CD4-positive, alpha-beta T cell (primary cell): ENCODE measurements at regions of chr10 and their contacts with region 1.

Region 1: DNA sequence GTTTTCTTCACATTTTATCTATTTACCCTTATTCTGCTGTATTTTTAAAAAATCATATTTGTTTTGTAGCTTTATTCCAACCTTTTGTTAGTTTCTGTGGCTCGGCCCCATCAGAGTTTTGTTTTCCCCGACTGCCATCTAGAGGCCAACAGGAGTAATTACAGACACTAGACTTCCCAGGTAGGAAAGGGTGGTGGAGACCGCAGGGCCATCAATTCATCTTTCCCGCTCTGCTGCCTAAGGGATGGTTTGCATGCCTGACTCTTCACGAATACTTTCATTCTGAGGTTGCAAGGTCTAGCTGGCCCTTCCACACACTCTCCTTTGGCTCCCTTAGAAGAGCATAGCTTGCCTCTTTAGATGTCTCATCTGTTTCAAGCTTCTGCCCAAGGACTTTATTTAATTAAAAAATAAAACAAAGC is 38.3 kb downstream of the LYZL2 start:
- DNase-seq: peak in 13 of 14 experiments; percentile 8 to 82 (median 20)
- ATAC-seq: peak; percentile 74
- H3K4me3 ChIP-seq: no peak overlapping the region
- H3K4me3 Mint-ChIP-seq: no peak overlapping the region
- H3K27ac ChIP-seq: no peak overlapping the region
- H3K27ac Mint-ChIP-seq: no peak overlapping the region
- H3K4me1 ChIP-seq: peaks cover 3% of the 10 kb centered on the region
- H3K4me1 Mint-ChIP-seq: no peaks in the 10 kb centered on the region
- H3K27me3 ChIP-seq: no peaks in the 10 kb centered on the region
- H3K27me3 Mint-ChIP-seq: no peaks in the 10 kb centered on the region
- CTCF ChIP-seq: peak; percentile 90

Region 2: GRCh38 chr10:30392564-30392990 is 198.7 kb before region 1 on chr10:
- CTCF ChIA-PET with region 1: interaction called, 16 read pairs
- POLR2A ChIA-PET with region 1: interaction called, 10 read pairs
- intact Hi-C with region 1: loop called (anchors 1 kb)
- DNase-seq: peak; percentile 59 to 86 (median 69)
- ATAC-seq: peak; percentile 100
- H3K4me3 ChIP-seq: no peak overlapping the region
- H3K4me3 Mint-ChIP-seq: no peak overlapping the region
- H3K27ac ChIP-seq: no peak overlapping the region
- H3K27ac Mint-ChIP-seq: no peak overlapping the region
- H3K4me1 ChIP-seq: peaks cover 7% of the 10 kb centered on the region
- H3K4me1 Mint-ChIP-seq: peaks cover 3% of the 10 kb centered on the region
- H3K27me3 ChIP-seq: peaks cover 0 to 2% of the 10 kb centered on the region in 2 experiments
- H3K27me3 Mint-ChIP-seq: peaks cover 12% of the 10 kb centered on the region
- CTCF ChIP-seq: peak; percentile 88

Region 3: DNA sequence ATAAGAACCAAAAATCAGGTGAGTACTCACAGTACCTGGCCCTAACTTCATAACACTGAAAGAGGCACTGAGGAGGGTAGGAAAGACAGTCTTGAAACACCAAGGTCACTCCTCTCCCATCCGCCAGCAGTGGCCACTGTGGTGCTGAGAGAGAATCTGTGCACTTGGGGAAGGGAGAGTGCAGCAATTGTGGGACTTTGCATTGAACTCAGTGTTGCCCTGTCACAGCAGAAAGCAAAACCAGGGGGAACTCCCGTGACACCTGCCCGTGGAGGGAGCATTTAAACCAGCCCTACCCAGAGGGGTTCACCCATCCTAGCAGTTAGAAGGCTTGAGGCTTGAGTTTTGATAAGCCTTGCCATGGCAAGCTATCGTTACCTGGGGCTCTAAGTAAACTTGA is 192.5 kb before region 1 on chr10:
- CTCF ChIA-PET with region 1: interaction called, 11 read pairs
- POLR2A ChIA-PET with region 1: no interaction called
- intact Hi-C with region 1: no loop called
- DNase-seq: peak in 1 of 14 experiments; percentile 27
- ATAC-seq: peak; percentile 26
- H3K4me3 ChIP-seq: no peak overlapping the region
- H3K4me3 Mint-ChIP-seq: no peak overlapping the region
- H3K27ac ChIP-seq: no peak overlapping the region
- H3K27ac Mint-ChIP-seq: no peak overlapping the region
- H3K4me1 ChIP-seq: peaks cover 18% of the 10 kb centered on the region
- H3K4me1 Mint-ChIP-seq: peaks cover 13% of the 10 kb centered on the region
- H3K27me3 ChIP-seq: no peaks in the 10 kb centered on the region
- H3K27me3 Mint-ChIP-seq: peaks cover 5% of the 10 kb centered on the region
- CTCF ChIP-seq: no peak

Region 4: DNA sequence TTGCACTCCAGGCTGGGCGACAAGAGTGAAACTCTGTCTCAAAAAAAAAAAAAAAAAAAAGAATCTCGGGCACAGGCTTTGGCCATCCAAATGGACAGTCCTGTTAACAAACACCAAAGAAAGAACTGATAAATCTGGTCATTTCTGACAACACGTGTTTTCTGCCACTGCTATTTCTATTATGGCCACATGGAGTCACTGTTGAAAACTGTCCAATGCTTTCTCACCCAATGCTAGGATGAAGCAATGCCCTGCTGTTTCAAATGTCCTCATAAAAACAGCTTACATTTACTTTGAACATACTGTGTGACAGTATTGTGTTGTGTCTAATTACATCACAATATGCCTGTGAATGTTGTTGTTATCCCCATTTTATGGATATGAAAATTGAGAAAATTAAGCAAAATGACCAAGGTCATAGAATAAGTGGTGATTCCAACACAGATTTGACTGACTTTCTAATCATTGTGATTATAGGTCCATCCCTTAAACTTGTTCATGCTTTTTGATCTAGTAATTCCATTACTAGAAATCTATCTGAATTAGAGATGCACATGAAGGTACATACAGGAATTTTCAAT is 177.2 kb before region 1 on chr10:
- CTCF ChIA-PET with region 1: no interaction called
- POLR2A ChIA-PET with region 1: no interaction called
- intact Hi-C with region 1: loop called (anchors 2 to 5 kb)
- DNase-seq: peak in 4 of 14 experiments; percentile 40 to 78 (median 72)
- ATAC-seq: peak; percentile 64
- H3K4me3 ChIP-seq: no peak overlapping the region
- H3K4me3 Mint-ChIP-seq: no peak overlapping the region
- H3K27ac ChIP-seq: no peak overlapping the region
- H3K27ac Mint-ChIP-seq: no peak overlapping the region
- H3K4me1 ChIP-seq: peaks cover 11% of the 10 kb centered on the region
- H3K4me1 Mint-ChIP-seq: peaks cover 13% of the 10 kb centered on the region
- H3K27me3 ChIP-seq: no peaks in the 10 kb centered on the region
- H3K27me3 Mint-ChIP-seq: no peaks in the 10 kb centered on the region
- CTCF ChIP-seq: peak; percentile 81

Region 5: DNA sequence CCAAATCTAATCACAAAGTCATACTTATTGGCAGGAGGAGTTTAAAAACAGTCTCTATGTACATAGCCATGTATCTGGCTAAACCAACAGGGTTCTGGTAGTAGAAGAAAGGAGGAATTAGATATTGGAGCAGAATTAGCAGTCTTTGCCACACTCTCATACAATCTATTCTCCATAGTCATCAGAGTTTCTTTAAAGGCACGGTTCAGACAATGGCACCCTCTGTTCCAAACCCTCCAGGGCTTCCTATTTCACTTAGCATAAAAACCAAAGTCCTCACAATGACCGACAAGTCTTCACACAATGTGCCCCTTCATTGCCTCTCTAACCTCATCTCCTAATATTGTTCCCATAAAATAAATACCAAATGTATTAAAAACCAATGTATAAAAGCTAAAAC is 427.7 kb after region 1 on chr10:
- CTCF ChIA-PET with region 1: no interaction called
- POLR2A ChIA-PET with region 1: no interaction called
- intact Hi-C with region 1: no loop called
- DNase-seq: no peak
- ATAC-seq: no peak
- H3K4me3 ChIP-seq: no peak overlapping the region
- H3K4me3 Mint-ChIP-seq: no peak overlapping the region
- H3K27ac ChIP-seq: no peak overlapping the region
- H3K27ac Mint-ChIP-seq: no peak overlapping the region
- H3K4me1 ChIP-seq: no peaks in the 10 kb centered on the region
- H3K4me1 Mint-ChIP-seq: no peaks in the 10 kb centered on the region
- H3K27me3 ChIP-seq: no peaks in the 10 kb centered on the region
- H3K27me3 Mint-ChIP-seq: no peaks in the 10 kb centered on the region
- CTCF ChIP-seq: no peak